Activated CD4-positive, alpha-beta T cell treated with anti-CD3 and anti-CD28 coated beads for 36 hours (primary cell): ENCODE measurements at regions of chr11 and their contacts with region 1.

Region 1: GRCh38 chr11:105044921-105045524 is at the start of gene CARD16:
- DNase-seq: peak; percentile 51
- ATAC-seq: peak; percentile 92
- H3K4me3 Mint-ChIP-seq: peak within 1 kb of the TSS; percentile 72
- H3K27ac Mint-ChIP-seq: peak within 1 kb of the TSS; percentile 94
- H3K4me1 Mint-ChIP-seq: peaks cover 45% of the 10 kb centered on the region
- H3K27me3 Mint-ChIP-seq: no peaks in the 10 kb centered on the region
- total RNA-seq, gene CARD16: 11.6 to 13.9 TPM

Region 2: GRCh38 chr11:104968355-104968855 is 76.6 kb before region 1 on chr11 and contains the start of gene CASP4:
- CTCF ChIA-PET with region 1: no interaction called
- POLR2A ChIA-PET with region 1: no interaction called
- intact Hi-C with region 1: loop called in 1 of 2 experiments (anchors 2 kb)
- DNase-seq: no peak
- ATAC-seq: peak; percentile 75
- H3K4me3 Mint-ChIP-seq: peak within 1 kb of the TSS; percentile 88
- H3K27ac Mint-ChIP-seq: peak within 1 kb of the TSS; percentile 96
- H3K4me1 Mint-ChIP-seq: peaks cover 25% of the 10 kb centered on the region
- H3K27me3 Mint-ChIP-seq: no peaks in the 10 kb centered on the region
- total RNA-seq, gene CASP4: 48.8 to 59.1 TPM

Region 3: GRCh38 chr11:105034813-105035620 is 10.0 kb before region 1 on chr11 and contains the start of gene CASP1:
- CTCF ChIA-PET with region 1: interaction called, 3 read pairs
- POLR2A ChIA-PET with region 1: no interaction called
- intact Hi-C with region 1: loop called in 1 of 2 experiments (anchors 1 kb)
- DNase-seq: peak; percentile 44
- ATAC-seq: peak; percentile 79
- H3K4me3 Mint-ChIP-seq: peak within 1 kb of the TSS; percentile 75
- H3K27ac Mint-ChIP-seq: peak within 1 kb of the TSS; percentile 95
- H3K4me1 Mint-ChIP-seq: peaks cover 49% of the 10 kb centered on the region
- H3K27me3 Mint-ChIP-seq: no peaks in the 10 kb centered on the region
- total RNA-seq, gene CASP1: 23.7 to 33.4 TPM

Region 4: GRCh38 chr11:106021967-106022794 is 977.2 kb after region 1 on chr11 and contains the start of gene MSANTD4:
- CTCF ChIA-PET with region 1: no interaction called
- POLR2A ChIA-PET with region 1: no interaction called
- intact Hi-C with region 1: loop called in 1 of 2 experiments (anchors 5 kb)
- DNase-seq: peak; percentile 98
- ATAC-seq: peak; percentile 98
- H3K4me3 Mint-ChIP-seq: peak within 1 kb of the TSS; percentile 91
- H3K27ac Mint-ChIP-seq: peak within 1 kb of the TSS; percentile 88
- H3K4me1 Mint-ChIP-seq: peaks cover 35% of the 10 kb centered on the region
- H3K27me3 Mint-ChIP-seq: peaks cover 2% of the 10 kb centered on the region
- total RNA-seq, gene MSANTD4: 12.4 to 13.1 TPM